Activated T-helper 1 cell treated with anti-CD3 and anti-CD28 coated beads, Interleukin-12 subunit alpha, Interleukin-12 subunit beta, Interleukin-2, Interleukin-4 antibody, amounts not matched to agents 30 ng/mL and 10 ng/mL and 1 ng/mL, durations not matched to agents 14 hours and 24 hours and 36 hours (primary cell): ENCODE measurements at regions of chr2 and their contacts with region 1.

Region 1: GRCh38 chr2:100060875-100061274 is 81.5 kb downstream of the AFF3 start:
- DNase-seq: peak; percentile 6
- H3K4me3 Mint-ChIP-seq: peak overlapping the region; percentile 57
- H3K27ac Mint-ChIP-seq: peak overlapping the region; percentile 88
- H3K4me1 Mint-ChIP-seq: peaks cover 25% of the 10 kb centered on the region
- H3K27me3 Mint-ChIP-seq: peaks cover 4% of the 10 kb centered on the region

Region 2: GRCh38 chr2:99354070-99354469 is 706.8 kb before region 1 on chr2:
- intact Hi-C with region 1: no loop called
- DNase-seq: no peak
- H3K4me3 Mint-ChIP-seq: no peak overlapping the region
- H3K27ac Mint-ChIP-seq: no peak overlapping the region
- H3K4me1 Mint-ChIP-seq: peaks cover 40% of the 10 kb centered on the region
- H3K27me3 Mint-ChIP-seq: no peaks in the 10 kb centered on the region

Region 3: GRCh38 chr2:100136310-100136709 is 75.4 kb after region 1 on chr2:
- intact Hi-C with region 1: loop called (anchors 2 kb)
- DNase-seq: no peak
- H3K4me3 Mint-ChIP-seq: no peak overlapping the region
- H3K27ac Mint-ChIP-seq: no peak overlapping the region
- H3K4me1 Mint-ChIP-seq: peaks cover 21% of the 10 kb centered on the region
- H3K27me3 Mint-ChIP-seq: peaks cover 21% of the 10 kb centered on the region

Region 4: DNA sequence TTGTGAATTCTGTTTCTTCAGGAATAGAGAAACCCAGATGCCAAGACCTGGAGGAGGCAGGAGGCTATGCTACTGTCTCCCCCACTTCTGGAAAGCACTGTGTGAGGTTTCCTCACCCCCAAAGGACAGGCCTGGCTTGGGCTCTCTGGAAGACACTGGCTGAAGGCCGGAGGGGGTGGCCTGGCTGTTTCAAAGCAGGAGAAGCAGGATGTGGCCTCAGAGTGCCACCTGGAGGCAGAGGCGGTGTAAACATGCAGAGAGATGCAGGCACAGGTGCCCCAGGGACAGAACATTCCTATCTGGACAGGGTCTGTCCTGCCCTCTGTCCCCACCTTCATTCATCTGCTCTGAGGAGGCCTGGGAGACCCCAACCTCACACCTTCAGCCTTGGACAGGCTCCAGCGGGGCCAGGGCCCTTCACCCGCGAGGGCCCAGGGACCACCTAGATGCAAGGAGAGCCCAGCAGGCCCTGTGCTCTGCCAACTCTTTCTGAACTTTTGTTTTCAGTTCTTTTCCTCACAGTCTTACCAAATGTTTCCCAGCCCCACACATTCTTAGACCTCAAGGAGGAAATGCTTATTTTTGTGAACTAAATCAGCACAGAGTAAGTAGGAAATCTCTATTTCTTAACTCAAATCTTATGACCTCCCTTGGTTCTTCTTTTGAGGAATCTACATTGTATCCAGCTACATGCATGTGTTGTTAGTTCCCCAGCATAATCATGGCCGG is 182.2 kb after region 1 on chr2:
- intact Hi-C with region 1: no loop called
- DNase-seq: no peak
- H3K4me3 Mint-ChIP-seq: no peak overlapping the region
- H3K27ac Mint-ChIP-seq: no peak overlapping the region
- H3K4me1 Mint-ChIP-seq: no peaks in the 10 kb centered on the region
- H3K27me3 Mint-ChIP-seq: peaks cover 4% of the 10 kb centered on the region